ENCODE measurements at regions of chr11 and their contacts with region 1.

Region 1: GRCh38 chr11:47766305-47767227 is 575 bp downstream of the FNBP4 start:
- DNase-seq: peak; percentile 41 to 89 (median 54)

Region 2: DNA sequence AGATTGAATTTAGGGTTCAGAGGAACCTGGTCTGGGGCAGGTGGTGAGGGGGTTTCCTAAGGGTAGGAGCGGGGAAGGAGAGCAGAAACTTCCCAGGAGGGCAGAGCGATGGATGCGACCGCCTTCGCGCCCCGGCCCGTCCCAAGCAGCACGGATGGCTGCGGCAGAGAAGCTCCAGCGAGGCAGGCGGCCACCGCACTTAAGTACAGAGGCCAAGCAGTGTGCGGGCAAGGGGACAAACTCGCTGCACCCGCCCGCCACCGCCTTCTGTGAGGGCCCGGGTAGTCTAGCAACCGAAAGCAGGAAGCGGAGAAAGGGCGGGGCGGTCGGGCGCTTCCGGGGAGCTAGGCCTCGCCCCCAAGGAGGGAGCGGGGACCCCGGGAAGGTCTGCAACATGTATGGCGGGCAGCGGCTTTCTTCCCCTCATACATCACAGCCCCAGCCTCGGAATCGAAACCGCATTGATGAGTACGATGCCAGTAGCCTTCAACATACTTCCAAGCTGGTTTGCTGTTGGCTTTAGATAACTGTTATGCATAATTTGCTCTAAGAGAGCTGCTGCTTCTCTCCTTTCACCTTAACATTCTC is 51.4 kb before region 1 on chr11 and contains the start of gene AGBL2:
- intact Hi-C with region 1: loop called (anchors 5 kb)
- DNase-seq: peak; percentile 31 to 94 (median 65)

Region 3: DNA sequence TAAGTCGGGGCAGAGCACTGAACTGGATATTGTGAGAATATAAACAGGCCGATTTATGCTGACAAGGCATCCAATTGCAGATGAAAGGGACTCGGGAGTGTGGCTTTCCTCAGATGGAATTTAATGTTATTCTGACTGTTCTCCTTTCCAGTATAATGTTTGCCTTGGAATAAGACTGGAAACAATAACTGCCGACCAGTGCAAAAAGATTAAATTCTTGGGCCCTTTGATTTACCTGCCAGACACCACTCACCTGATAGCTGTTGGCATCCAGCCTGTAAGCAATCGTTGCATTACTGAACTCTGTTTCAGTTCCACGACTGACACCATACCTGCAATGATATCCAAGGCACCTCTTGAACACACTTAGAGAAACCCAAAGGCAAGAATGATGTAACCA is 70.7 kb after region 1 on chr11:
- intact Hi-C with region 1: no loop called
- DNase-seq: no peak